ENCODE measurements at regions of chr19 and their contacts with region 1.

Region 1: DNA sequence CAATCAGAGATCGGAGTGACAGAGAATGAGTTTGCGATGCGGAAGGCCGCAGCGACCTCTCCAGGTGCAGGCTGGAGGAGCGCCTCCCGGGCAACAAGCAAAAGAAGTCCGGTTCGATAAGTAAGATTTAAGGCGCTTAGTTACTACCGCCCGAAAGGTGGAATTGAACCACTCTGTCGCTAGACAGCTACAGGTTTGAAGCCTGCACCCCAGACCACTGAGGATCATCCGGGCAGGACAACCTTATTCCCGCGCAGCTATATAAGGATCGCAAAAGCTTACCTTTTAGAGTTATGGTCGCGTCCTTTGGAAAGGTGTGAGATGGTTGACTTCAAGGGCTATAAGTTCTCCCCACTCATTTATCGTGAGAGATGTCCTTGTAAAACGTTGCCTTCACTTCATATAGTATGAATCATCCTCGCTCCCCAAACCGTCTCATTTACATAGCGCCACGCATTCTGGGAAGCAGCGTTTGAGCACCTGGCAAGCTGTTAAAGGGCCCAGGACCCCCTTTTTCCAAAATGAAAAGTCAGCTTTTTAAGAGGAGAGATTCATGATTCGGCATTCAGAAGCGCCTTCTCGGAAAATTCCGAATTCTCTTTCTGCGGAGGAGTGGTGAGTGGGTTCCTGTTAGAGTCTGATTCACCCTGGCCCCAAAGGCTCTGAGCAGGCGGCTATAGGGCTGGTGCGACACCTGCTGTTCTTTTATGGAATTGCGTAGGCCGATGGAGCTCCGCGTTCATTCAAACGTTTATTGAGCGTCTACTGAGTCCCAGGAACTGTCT is 10.8 kb downstream of the FOSB start:
- DNase-seq: peak; percentile 92
- H3K4me3 ChIP-seq: peak overlapping the region; percentile 13 to 71 (median 46)
- H3K27ac ChIP-seq: peak overlapping the region; percentile 96
- H3K4me1 ChIP-seq: peaks cover 3% of the 10 kb centered on the region
- H3K27me3 ChIP-seq: no peaks in the 10 kb centered on the region
- CTCF ChIP-seq: peak; percentile 91 to 95
- POLR2A ChIP-seq: no peak

Region 2: GRCh38 chr19:45423589-45424190 is 55.0 kb before region 1 on chr19 and contains the start of gene ERCC1:
- CTCF ChIA-PET with region 1: interaction called, 75 read pairs
- POLR2A ChIA-PET with region 1: no interaction called
- dilution Hi-C with region 1: no loop called
- intact Hi-C with region 1: loop called (anchors 1 kb)
- DNase-seq: peak; percentile 94
- H3K4me3 ChIP-seq: peak within 1 kb of the TSS; percentile 59 to 74 (median 73)
- H3K27ac ChIP-seq: peak within 1 kb of the TSS; percentile 100
- H3K4me1 ChIP-seq: peaks cover 30% of the 10 kb centered on the region
- H3K27me3 ChIP-seq: no peaks in the 10 kb centered on the region
- CTCF ChIP-seq: no peak
- POLR2A ChIP-seq: peak; percentile 61
- total RNA-seq, gene ERCC1: 81.8 and 82.6 TPM in 2 replicates

Region 3: GRCh38 chr19:45446320-45446763 is 32.3 kb before region 1 on chr19:
- CTCF ChIA-PET with region 1: interaction called, 891 read pairs
- POLR2A ChIA-PET with region 1: no interaction called
- dilution Hi-C with region 1: no loop called
- intact Hi-C with region 1: loop called (anchors 1 kb)
- DNase-seq: peak; percentile 47
- H3K4me3 ChIP-seq: no peak overlapping the region
- H3K27ac ChIP-seq: no peak overlapping the region
- H3K4me1 ChIP-seq: peaks cover 34% of the 10 kb centered on the region
- H3K27me3 ChIP-seq: no peaks in the 10 kb centered on the region
- CTCF ChIP-seq: peak; percentile 42
- POLR2A ChIP-seq: no peak